ENCODE measurements at regions of chr19 and their contacts with region 1.

Region 1: DNA sequence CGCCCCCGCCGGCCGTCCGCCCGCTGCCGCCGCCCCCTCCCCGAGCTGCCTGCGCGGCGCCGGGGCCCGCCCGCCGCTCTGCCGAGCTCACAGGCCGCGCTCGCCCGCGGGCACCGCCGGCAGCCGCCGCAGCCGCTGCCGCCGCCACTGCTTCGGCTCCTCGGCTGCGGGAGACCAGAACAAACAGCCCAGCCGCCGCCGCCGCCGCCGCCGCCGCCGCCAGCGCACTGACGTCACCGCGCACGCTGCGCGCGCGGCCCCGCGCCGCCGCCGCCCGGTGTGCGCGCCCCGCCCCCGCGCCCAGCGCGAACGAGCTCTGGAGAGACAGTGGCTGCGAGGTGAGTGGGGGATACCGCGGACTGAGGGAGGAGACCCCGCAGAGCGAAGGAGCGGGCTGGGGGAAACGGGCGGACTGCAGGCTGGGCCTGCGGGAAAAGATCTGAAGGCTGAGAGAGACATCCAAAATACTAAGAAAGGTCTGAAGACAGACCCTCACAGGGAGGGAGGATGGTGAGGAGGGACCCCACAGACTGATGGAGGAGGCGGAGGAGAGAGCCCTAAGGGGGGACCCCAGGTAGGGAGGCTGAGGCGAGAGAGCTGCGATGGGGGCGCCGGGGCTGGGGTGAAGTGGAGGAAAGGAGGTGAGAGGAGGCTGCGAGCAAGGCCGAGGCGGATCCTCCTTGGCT is at the start of gene BRD4:
- DNase-seq: peak in 9 of 10 donors; percentile 38 to 79 (median 62)
- H3K4me3 ChIP-seq: peak within 1 kb of the TSS; percentile 71 to 97 (median 92)
- H3K27ac ChIP-seq: peak within 1 kb of the TSS in 57 of 59 donors; percentile 49 to 94 (median 85)
- H3K27me3 ChIP-seq: no peaks in the 10 kb centered on the region
- CTCF ChIP-seq: no peak
- total RNA-seq, gene BRD4: 84.8 to 154 (median 112) TPM

Region 2: GRCh38 chr19:15136246-15136954 is 196.1 kb before region 1 on chr19:
- intact Hi-C with region 1: no loop called
- DNase-seq: no peak
- H3K4me3 ChIP-seq: no peak overlapping the region
- H3K27ac ChIP-seq: no peak overlapping the region
- H3K27me3 ChIP-seq: no peaks in the 10 kb centered on the region
- CTCF ChIP-seq: no peak

Region 3: GRCh38 chr19:15264061-15264932 is 68.2 kb before region 1 on chr19:
- intact Hi-C with region 1: loop called (anchors 2 kb)
- DNase-seq: peak; percentile 69 to 81 (median 78)
- H3K4me3 ChIP-seq: peak overlapping the region in 11 of 59 donors; percentile 1 to 25 (median 10)
- H3K27ac ChIP-seq: peak overlapping the region in 54 of 59 donors; percentile 3 to 91 (median 75)
- H3K27me3 ChIP-seq: no peaks in the 10 kb centered on the region
- CTCF ChIP-seq: peak; percentile 65 to 95 (median 86)

Region 4: GRCh38 chr19:15288146-15288963 is 44.1 kb before region 1 on chr19:
- intact Hi-C with region 1: loop called (anchors 2 kb)
- DNase-seq: peak; percentile 76 to 94 (median 90)
- H3K4me3 ChIP-seq: peak overlapping the region in 38 of 59 donors; percentile 1 to 48 (median 21)
- H3K27ac ChIP-seq: peak overlapping the region in 53 of 59 donors; percentile 4 to 80 (median 53)
- H3K27me3 ChIP-seq: no peaks in the 10 kb centered on the region
- CTCF ChIP-seq: peak in 35 of 56 donors; percentile 7 to 55 (median 32)

Region 5: GRCh38 chr19:15379083-15379995 is 46.9 kb after region 1 on chr19 and contains the start of gene AKAP8:
- intact Hi-C with region 1: loop called in 1 of 2 experiments (anchors 5 kb)
- DNase-seq: peak; percentile 96 to 99 (median 98)
- H3K4me3 ChIP-seq: peak within 1 kb of the TSS; percentile 52 to 100 (median 96)
- H3K27ac ChIP-seq: peak within 1 kb of the TSS; percentile 71 to 99 (median 96)
- H3K27me3 ChIP-seq: no peaks in the 10 kb centered on the region
- CTCF ChIP-seq: peak in 7 of 56 donors; percentile 8 to 50 (median 28)
- total RNA-seq, gene AKAP8: 18.6 to 51.6 (median 29.6) TPM

Region 6: DNA sequence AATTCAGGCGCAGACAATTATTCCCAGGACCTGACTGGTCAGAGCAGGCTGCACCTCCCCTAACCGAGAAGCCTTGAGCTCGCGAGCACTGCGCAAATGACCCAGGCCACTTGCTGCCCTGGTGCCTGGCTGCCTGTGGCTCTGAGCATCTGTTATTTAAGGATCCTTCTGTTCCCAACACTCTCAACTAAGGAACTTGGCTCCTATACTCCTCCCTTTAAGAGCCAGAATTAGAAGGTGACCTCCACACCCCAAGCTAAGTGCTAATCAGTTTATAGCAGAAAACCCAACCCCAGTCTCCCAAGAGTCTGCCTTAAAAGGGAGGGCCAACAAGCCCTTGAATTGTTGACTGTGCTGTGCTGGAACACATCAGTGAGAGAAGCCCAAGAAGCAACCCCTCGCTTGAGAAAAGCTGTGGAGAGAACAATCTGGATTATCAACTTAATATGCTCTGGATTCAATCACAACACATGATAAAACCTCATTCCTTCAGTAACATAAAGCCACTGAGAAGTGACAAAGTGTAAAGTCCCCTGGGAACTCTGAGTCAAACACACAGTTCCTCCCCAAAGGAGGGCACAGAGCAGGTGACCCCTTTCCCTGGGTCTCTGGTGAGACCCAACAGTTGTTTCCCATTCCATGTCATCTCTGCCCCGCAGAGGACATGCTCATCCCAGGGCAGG is 71.8 kb after region 1 on chr19:
- intact Hi-C with region 1: no loop called
- DNase-seq: peak in 2 of 10 donors; percentile 2 to 69
- H3K4me3 ChIP-seq: peak overlapping the region in 14 of 59 donors; percentile 0 to 31 (median 6)
- H3K27ac ChIP-seq: peak overlapping the region in 56 of 59 donors; percentile 4 to 84 (median 59)
- H3K27me3 ChIP-seq: no peaks in the 10 kb centered on the region
- CTCF ChIP-seq: no peak

Region 7: GRCh38 chr19:15418588-15419412 is 86.3 kb after region 1 on chr19 and contains the start of gene AKAP8L:
- intact Hi-C with region 1: loop called in 1 of 2 experiments (anchors 5 kb)
- DNase-seq: peak; percentile 91 to 99 (median 98)
- H3K4me3 ChIP-seq: peak within 1 kb of the TSS; percentile 73 to 100 (median 98)
- H3K27ac ChIP-seq: peak within 1 kb of the TSS; percentile 0 to 97 (median 89)
- H3K27me3 ChIP-seq: no peaks in the 10 kb centered on the region
- CTCF ChIP-seq: peak in 53 of 56 donors; percentile 29 to 69 (median 52)
- total RNA-seq, gene AKAP8L: 104 to 260 (median 142) TPM

Region 8: GRCh38 chr19:15432629-15433518 is 100.4 kb after region 1 on chr19:
- intact Hi-C with region 1: loop called in 1 of 2 experiments (anchors 5 kb)
- DNase-seq: peak; percentile 83 to 97 (median 90)
- H3K4me3 ChIP-seq: peak overlapping the region; percentile 57 to 99 (median 80)
- H3K27ac ChIP-seq: peak overlapping the region in 57 of 59 donors; percentile 30 to 93 (median 84)
- H3K27me3 ChIP-seq: no peaks in the 10 kb centered on the region
- CTCF ChIP-seq: peak in 9 of 56 donors; percentile 6 to 30 (median 14)

Measured in dorsolateral prefrontal cortex (tissue), 120 donors.